AG04449 (cell line): ENCODE measurements at regions of chr11 and their contacts with region 1.

Region 1: DNA sequence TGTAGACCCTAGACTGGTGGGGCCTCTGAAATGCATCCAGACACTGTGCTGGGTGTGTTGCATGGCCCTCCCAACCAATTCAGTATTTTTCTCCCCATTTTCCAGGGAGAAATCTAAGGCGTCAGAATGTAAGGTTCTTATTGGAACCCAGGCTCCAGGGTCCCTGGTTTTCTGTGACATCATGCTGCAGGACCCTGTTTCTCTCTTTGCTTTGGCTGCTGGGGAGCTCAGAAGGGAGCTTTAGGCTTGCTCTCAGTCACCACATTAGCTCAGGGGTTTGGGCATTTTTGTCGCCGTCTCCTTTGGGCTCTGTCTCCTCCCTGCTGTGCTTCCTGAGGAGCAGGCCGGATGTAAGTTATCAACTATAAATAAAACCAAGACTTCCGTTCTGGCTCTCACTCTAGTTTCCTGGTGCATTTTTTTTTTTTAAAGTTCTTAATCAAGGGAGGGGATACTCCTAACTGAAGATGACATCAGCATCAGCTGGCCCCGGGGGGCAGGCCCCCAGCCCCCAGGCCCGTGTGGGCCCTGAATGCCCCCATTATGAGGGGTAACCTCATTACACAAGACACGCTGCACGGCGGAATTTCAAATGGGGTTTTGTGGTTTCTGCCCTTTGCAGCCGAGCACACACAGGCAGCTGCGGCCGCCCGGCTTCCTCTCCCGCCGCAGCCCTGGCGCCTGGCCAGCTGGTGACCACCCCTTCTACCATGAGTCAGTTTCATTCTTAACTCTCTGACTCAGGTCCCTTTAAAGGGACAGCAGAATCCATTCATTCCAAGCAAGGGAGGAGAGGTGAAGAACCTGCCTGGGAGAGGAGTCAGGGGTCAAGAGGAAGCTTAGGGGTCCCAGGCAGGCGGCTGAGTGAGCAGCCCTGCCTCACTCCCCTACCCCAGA is 3.2 kb downstream of the MYEOV start:
- DNase-seq: peak; percentile 95
- H3K4me3 ChIP-seq: no peak overlapping the region; the same call in 1 of the 2 replicates
- CTCF ChIP-seq: no peak

Region 2: GRCh38 chr11:69274531-69275255 is 22.4 kb before region 1 on chr11:
- CTCF ChIA-PET with region 1: interaction called, 11 read pairs
- POLR2A ChIA-PET with region 1: no interaction called
- DNase-seq: no peak
- H3K4me3 ChIP-seq: no peak overlapping the region
- CTCF ChIP-seq: no peak

Region 3: GRCh38 chr11:69321877-69322361 is 24.8 kb after region 1 on chr11:
- CTCF ChIA-PET with region 1: no interaction called
- POLR2A ChIA-PET with region 1: interaction called, 10 read pairs
- DNase-seq: peak; percentile 63
- H3K4me3 ChIP-seq: no peak overlapping the region
- CTCF ChIP-seq: no peak

Region 4: DNA sequence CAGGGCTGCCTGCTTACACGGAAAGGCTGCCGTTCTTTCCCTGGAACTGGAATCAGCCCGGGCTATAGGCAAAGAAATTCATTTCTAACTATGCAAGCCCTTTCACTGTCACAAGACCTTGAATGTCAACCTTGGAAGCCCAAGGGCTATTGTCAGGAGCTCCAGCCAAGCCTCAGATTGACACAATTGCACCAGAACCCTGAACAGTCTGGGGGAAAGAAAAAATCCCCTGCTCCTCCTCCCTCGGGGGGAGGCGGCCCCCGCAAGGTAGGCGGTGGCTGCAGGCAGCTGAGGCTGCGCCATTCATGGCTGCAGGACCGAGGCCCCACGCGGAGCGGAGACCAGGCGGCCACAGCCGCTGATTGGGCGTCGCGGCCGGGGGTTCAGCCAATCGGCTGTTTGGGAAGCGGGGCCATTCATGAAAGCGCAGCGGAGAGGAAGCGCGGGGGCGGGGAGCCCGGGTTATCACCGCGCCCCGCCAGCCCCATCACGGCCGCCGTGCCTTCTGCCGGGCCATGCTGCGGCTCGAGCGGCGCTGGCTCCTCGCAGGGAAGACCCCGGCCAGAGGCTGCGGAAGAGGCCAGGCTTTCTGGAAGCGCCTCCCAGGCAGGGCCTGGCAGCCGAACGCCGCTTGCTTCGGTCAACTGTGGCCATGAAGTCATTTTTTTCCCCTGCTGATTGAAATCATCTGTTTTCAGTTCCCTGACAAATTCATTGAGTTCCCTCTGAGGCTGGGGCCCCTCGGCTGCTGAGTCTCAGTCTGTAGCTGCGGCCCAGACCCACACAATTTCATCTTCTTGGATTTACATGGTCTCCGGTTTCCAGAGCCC is 146.2 kb after region 1 on chr11:
- CTCF ChIA-PET with region 1: interaction called, 6 read pairs
- POLR2A ChIA-PET with region 1: interaction called, 12 read pairs
- DNase-seq: no peak
- H3K4me3 ChIP-seq: peak overlapping the region; percentile 54
- CTCF ChIP-seq: no peak

Region 5: DNA sequence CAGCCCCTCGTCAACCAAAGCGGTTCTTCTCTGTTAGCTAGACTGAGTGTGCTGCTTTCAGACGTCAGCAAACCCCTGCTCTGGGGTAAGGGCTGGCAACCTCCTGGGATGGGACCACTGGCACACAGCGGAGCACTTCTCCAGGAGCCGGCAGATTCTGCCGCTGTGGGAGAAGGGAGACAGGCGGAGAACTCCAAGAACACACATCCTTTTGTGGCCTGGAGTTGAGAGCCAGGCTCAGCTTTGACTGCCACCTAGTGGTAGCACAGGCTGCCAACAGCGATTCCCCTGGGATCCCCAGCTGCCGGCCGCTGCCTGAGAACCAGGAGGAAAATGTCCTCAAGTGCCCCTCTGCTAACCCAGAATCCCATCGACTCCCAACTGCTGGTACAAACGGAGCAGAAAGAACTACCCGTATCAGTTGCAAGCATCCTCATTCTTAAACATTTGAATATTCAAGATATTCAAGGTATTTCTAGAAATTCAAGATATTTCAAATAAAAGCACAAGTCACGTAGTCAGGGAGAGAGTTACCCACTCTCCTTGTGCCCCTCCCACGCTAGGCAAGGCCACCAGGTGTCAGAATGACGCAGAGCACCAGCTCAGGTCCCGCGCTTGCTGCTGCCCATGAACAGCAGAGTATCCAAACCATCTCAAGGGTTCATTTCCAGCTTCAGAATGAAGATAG is 373.2 kb after region 1 on chr11:
- CTCF ChIA-PET with region 1: interaction called, 25 read pairs
- POLR2A ChIA-PET with region 1: no interaction called
- DNase-seq: peak; percentile 31
- H3K4me3 ChIP-seq: no peak overlapping the region
- CTCF ChIP-seq: peak; percentile 96